ENCODE measurements at regions of chr18 and their contacts with region 1.

Region 1: GRCh38 chr18:40789286-40789685 is 1165.7 kb upstream of the PIK3C3 start:
- DNase-seq: no peak
- ATAC-seq: no peak
- H3K4me3 ChIP-seq: no peak overlapping the region
- H3K4me3 Mint-ChIP-seq: no peak overlapping the region
- H3K27ac ChIP-seq: no peak overlapping the region
- H3K27ac Mint-ChIP-seq: no peak overlapping the region
- H3K4me1 ChIP-seq: no peaks in the 10 kb centered on the region
- H3K4me1 Mint-ChIP-seq: no peaks in the 10 kb centered on the region
- H3K27me3 ChIP-seq: no peaks in the 10 kb centered on the region
- H3K27me3 Mint-ChIP-seq: no peaks in the 10 kb centered on the region

Region 2: DNA sequence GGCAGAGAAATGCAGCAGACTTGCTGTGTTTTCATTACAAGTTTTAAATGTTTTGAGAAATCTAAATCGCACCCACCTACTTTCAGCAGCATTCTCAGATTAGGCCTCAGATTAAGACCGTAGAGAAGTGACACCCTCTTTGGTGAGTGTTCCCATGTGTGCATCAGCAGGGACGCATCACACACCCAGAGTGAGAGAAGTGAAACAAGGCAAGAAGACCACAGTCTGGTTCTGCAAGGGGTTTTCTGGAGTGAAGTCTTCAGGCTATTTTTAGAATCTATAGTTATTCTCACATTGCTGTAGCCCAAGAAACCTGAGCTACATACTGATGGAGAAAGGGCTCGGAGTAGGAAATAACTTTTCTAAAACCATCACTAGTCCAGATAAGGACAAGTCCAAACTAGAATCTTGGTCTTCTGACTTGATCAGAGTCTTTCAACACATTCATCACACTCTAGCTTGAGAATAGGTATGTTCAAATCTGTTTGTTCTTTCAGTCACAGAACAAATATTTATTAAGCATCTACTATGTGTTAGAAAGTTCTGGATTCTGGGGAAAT is 50.9 kb before region 1 on chr18:
- CTCF ChIA-PET with region 1: no interaction called
- POLR2A ChIA-PET with region 1: no interaction called
- intact Hi-C with region 1: loop called in 1 of 2 experiments (anchors 10 kb)
- DNase-seq: no peak
- ATAC-seq: no peak
- H3K4me3 ChIP-seq: no peak overlapping the region
- H3K4me3 Mint-ChIP-seq: no peak overlapping the region
- H3K27ac ChIP-seq: no peak overlapping the region
- H3K27ac Mint-ChIP-seq: no peak overlapping the region
- H3K4me1 ChIP-seq: no peaks in the 10 kb centered on the region
- H3K4me1 Mint-ChIP-seq: no peaks in the 10 kb centered on the region
- H3K27me3 ChIP-seq: no peaks in the 10 kb centered on the region
- H3K27me3 Mint-ChIP-seq: no peaks in the 10 kb centered on the region